Activated T-helper 1 cell treated with anti-CD3 and anti-CD28 coated beads, Interleukin-12 subunit alpha, Interleukin-12 subunit beta, Interleukin-2, Interleukin-4 antibody, amounts not matched to agents 30 ng/mL and 10 ng/mL and 1 ng/mL, durations not matched to agents 14 hours and 24 hours and 36 hours (primary cell): ENCODE measurements at regions of chr9 and their contacts with region 1.

Region 1: GRCh38 chr9:34899535-34900158 is 58.4 kb upstream of the PHF24 start:
- DNase-seq: peak; percentile 71
- H3K4me3 Mint-ChIP-seq: no peak overlapping the region
- H3K27ac Mint-ChIP-seq: no peak overlapping the region
- H3K4me1 Mint-ChIP-seq: no peaks in the 10 kb centered on the region
- H3K27me3 Mint-ChIP-seq: peaks cover 24% of the 10 kb centered on the region

Region 2: GRCh38 chr9:34929506-34930102 is 30.0 kb after region 1 on chr9:
- intact Hi-C with region 1: loop called (anchors 1 kb)
- DNase-seq: no peak
- H3K4me3 Mint-ChIP-seq: no peak overlapping the region
- H3K27ac Mint-ChIP-seq: no peak overlapping the region
- H3K4me1 Mint-ChIP-seq: peaks cover 13% of the 10 kb centered on the region
- H3K27me3 Mint-ChIP-seq: peaks cover 11% of the 10 kb centered on the region

Region 3: DNA sequence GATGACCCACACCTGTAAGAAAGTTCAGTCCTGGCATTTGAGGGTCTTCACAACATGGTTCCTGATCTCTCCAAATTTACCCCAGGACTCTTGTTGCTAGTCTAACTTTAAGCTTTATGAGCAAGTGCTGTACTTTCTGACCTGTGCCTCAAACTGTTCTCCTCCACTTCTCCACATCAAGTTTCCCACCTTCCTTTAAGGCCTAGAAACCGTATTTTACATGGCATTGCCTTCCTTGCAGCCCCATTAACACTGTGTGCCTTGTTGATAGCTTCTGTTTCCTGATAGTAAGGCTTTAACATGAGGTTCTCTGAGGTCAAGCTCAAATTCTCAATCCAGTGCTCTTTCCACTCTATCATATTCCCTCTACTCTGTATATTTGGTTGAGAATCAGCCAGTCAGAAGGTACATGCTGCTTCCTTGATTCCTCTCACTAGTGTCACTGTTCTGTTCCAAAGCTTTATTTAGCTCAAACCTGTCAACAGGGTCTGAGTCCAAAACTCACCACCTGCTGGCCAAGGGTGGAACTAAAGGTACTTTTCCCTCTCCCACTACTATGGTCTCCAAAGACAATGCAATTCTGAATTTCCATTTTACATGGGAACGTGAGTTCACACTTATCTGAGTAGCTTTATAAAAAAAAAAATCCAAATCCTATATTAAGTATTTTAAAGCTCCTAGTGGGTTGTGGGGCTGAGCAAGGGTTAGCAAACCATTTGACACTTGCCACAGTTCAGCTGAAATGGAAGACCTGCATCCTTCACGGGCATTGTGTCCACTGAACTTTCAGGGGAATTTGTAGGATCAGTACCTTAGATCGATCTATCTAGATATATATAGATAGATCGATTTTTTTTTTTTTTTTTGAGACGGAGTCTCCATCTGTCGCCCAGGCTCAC is 151.7 kb after region 1 on chr9:
- intact Hi-C with region 1: loop called (anchors 1 kb)
- DNase-seq: peak; percentile 29
- H3K4me3 Mint-ChIP-seq: no peak overlapping the region
- H3K27ac Mint-ChIP-seq: peak overlapping the region; percentile 27
- H3K4me1 Mint-ChIP-seq: peaks cover 5% of the 10 kb centered on the region
- H3K27me3 Mint-ChIP-seq: no peaks in the 10 kb centered on the region

Region 4: DNA sequence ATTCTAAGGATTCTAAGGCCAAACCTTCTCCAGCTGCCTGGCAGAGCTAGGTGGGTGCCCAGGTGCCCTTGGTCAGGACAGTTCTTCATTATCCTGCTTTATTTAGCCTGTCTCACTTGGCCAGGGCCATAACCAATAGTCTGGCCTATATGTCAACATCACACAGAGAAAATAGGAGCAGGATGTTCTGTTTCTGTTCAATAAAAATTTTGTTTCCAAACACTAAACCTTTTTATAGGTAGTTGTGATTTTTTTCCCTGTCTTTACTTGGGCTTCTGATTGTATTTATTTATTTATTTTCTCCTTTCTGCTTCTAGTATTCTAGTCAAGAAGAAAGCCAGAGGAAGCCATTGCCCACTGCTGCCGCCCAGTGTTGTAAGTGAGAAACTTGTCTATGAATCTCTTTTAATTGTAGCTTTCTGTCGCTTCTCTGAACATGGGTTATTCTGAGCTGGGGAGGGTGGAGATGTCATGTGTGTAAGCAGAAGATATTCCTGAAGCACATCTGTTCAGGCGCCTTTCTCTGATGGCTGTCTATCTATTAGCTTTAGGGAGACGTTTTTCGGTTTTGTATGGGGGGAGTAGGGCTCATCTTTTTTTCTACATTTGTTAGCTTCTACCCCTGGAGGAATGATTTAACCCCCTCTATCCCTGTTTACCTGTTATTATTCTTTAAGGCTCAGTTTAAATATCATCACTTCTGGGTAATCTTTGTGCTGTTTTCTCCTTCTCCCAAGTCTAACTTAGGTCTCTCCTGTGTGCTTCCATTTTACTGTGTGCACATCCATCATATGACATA is 359.2 kb after region 1 on chr9:
- intact Hi-C with region 1: loop called (anchors 1 kb)
- DNase-seq: no peak
- H3K4me3 Mint-ChIP-seq: no peak overlapping the region
- H3K27ac Mint-ChIP-seq: no peak overlapping the region
- H3K4me1 Mint-ChIP-seq: peaks cover 5% of the 10 kb centered on the region
- H3K27me3 Mint-ChIP-seq: peaks cover 2% of the 10 kb centered on the region